CD8-positive, alpha-beta memory T cell (primary cell): ENCODE measurements at regions of chr9 and their contacts with region 1.

Region 1: GRCh38 chr9:19464764-19465585 is 56.2 kb downstream of the ACER2 start:
- DNase-seq: peak; percentile 51 to 72 (median 66)
- H3K4me3 ChIP-seq: peak overlapping the region; percentile 49
- H3K4me3 Mint-ChIP-seq: peak overlapping the region; percentile 78 to 91 (median 91)
- H3K27ac ChIP-seq: no peak overlapping the region
- H3K27ac Mint-ChIP-seq: peak overlapping the region in 4 of 8 donors; percentile 30 to 88 (median 54)
- H3K4me1 ChIP-seq: peaks cover 4% of the 10 kb centered on the region
- H3K4me1 Mint-ChIP-seq: peaks cover 8 to 13% (median 11%) of the 10 kb centered on the region in 3 donors
- H3K27me3 ChIP-seq: no peaks in the 10 kb centered on the region
- H3K27me3 Mint-ChIP-seq: no peaks in the 10 kb centered on the region

Region 2: DNA sequence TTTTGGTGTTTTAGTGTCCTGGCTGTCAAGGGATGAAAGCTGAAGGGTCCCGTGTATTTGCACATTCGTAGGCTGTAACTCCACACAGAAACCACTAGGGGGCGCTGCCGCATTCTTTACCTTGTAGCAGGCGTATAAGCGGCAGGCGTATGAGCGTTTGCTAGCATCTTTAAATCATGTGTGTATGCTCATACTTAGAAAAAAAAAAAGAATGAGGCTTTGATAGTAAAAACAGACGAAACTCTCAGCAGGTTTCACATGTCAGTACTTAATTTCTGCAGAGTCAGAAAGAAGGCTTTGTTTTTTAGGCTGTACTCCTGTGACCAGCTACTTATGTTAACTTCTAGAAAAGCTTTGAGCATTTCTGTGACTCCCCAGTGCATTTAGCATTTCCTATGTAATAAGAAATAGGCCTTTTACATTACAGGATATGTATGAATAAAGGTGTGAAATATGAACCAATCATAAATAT is 1209.8 kb before region 1 on chr9:
- CTCF ChIA-PET with region 1: interaction called, 10 read pairs
- POLR2A ChIA-PET with region 1: no interaction called
- DNase-seq: peak; percentile 45 to 69 (median 58)
- H3K4me3 ChIP-seq: no peak overlapping the region
- H3K4me3 Mint-ChIP-seq: no peak overlapping the region
- H3K27ac ChIP-seq: no peak overlapping the region
- H3K27ac Mint-ChIP-seq: peak overlapping the region in 1 of 8 donors; percentile 31
- H3K4me1 ChIP-seq: no peaks in the 10 kb centered on the region
- H3K4me1 Mint-ChIP-seq: peaks cover 0 to 8% (median 4%) of the 10 kb centered on the region in 3 donors
- H3K27me3 ChIP-seq: peaks cover 3% of the 10 kb centered on the region
- H3K27me3 Mint-ChIP-seq: peaks cover 2 to 13% of the 10 kb centered on the region in 2 donors

Region 3: DNA sequence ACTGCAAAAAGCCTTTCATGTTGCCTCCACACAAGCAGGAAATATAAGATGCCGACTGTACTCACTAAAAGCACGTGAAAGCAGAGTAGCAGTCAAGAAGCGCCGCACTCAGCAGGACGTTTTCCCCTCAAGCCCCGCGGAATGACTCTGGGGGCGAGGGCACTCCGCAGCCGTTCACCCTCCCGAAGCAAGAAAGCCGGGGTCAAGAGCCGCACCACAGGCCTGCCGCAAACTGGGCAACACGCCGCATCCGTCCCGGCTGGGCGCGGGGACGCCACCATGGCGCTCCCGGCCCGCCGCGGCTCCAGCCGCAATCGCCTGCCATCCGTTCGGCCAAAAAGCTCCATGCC is 85.3 kb before region 1 on chr9:
- CTCF ChIA-PET with region 1: interaction called, 10 read pairs
- POLR2A ChIA-PET with region 1: no interaction called
- DNase-seq: peak in 2 of 5 donors; percentile 31 to 40
- H3K4me3 ChIP-seq: peak overlapping the region; percentile 97
- H3K4me3 Mint-ChIP-seq: peak overlapping the region; percentile 94 to 100 (median 98)
- H3K27ac ChIP-seq: peak overlapping the region; percentile 89
- H3K27ac Mint-ChIP-seq: peak overlapping the region; percentile 90 to 100 (median 99)
- H3K4me1 ChIP-seq: peaks cover 30% of the 10 kb centered on the region
- H3K4me1 Mint-ChIP-seq: peaks cover 46 to 56% (median 49%) of the 10 kb centered on the region in 3 donors
- H3K27me3 ChIP-seq: no peaks in the 10 kb centered on the region
- H3K27me3 Mint-ChIP-seq: peaks cover 0 to 1% of the 10 kb centered on the region in 2 donors

Region 4: DNA sequence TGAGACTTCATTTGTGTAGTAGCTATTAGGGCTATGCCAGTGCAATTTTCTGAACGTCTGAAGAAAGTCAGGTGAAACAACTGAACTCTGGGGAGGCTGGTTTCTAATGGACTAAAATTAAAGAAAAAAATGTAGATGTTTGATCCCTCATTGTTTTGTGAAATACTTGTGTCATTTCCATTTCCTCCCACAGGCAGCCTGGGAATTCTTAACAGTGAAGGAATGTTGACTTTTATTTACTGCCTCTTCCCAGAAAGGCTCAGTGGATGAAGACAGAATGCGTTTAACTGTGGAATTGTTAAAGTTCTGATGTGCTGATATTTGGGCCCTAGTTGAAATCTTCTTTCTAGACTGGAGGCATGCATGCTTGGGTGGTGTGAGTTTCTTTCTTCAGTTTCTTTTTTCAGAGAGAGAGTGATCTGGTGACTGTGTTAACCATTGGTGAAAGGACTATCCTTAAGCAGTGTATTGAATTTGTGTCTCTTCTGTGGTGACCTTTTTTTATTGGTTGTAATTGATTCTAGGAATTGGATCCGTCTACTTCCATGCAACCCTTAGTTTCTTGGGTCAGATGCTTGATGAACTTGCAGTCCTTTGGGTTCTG is 40.7 kb before region 1 on chr9:
- CTCF ChIA-PET with region 1: interaction called, 14 read pairs
- POLR2A ChIA-PET with region 1: no interaction called
- DNase-seq: no peak
- H3K4me3 ChIP-seq: no peak overlapping the region
- H3K4me3 Mint-ChIP-seq: no peak overlapping the region
- H3K27ac ChIP-seq: no peak overlapping the region
- H3K27ac Mint-ChIP-seq: peak overlapping the region in 1 of 8 donors; percentile 6
- H3K4me1 ChIP-seq: no peaks in the 10 kb centered on the region
- H3K4me1 Mint-ChIP-seq: no peaks in the 10 kb centered on the region
- H3K27me3 ChIP-seq: no peaks in the 10 kb centered on the region
- H3K27me3 Mint-ChIP-seq: no peaks in the 10 kb centered on the region

Region 5: DNA sequence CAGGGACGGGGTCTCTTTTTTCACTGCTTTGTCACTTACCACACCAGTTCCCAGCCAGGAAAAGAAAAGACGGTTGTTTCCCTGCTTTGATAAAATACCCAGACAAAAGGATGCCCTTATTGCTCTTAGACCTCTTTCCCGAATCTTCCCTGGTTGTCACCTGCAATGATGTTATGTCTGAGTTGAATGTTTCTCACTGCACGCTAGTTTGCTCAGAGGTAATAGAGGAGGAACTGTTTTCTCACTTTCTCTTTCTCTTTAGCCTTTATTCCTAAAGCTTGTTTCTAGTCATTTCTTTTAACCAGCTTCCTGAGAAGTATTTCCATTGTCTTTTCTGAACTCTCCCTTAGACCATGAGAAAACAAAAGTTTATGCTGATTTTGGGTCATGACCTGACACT is 23.2 kb before region 1 on chr9:
- CTCF ChIA-PET with region 1: interaction called, 42 read pairs
- POLR2A ChIA-PET with region 1: no interaction called
- DNase-seq: no peak
- H3K4me3 ChIP-seq: peak overlapping the region; percentile 44
- H3K4me3 Mint-ChIP-seq: peak overlapping the region; percentile 14 to 77 (median 69)
- H3K27ac ChIP-seq: no peak overlapping the region
- H3K27ac Mint-ChIP-seq: peak overlapping the region in 7 of 8 donors; percentile 47 to 92 (median 83)
- H3K4me1 ChIP-seq: no peaks in the 10 kb centered on the region
- H3K4me1 Mint-ChIP-seq: peaks cover 11 to 16% (median 14%) of the 10 kb centered on the region in 3 donors
- H3K27me3 ChIP-seq: no peaks in the 10 kb centered on the region
- H3K27me3 Mint-ChIP-seq: no peaks in the 10 kb centered on the region

Region 6: DNA sequence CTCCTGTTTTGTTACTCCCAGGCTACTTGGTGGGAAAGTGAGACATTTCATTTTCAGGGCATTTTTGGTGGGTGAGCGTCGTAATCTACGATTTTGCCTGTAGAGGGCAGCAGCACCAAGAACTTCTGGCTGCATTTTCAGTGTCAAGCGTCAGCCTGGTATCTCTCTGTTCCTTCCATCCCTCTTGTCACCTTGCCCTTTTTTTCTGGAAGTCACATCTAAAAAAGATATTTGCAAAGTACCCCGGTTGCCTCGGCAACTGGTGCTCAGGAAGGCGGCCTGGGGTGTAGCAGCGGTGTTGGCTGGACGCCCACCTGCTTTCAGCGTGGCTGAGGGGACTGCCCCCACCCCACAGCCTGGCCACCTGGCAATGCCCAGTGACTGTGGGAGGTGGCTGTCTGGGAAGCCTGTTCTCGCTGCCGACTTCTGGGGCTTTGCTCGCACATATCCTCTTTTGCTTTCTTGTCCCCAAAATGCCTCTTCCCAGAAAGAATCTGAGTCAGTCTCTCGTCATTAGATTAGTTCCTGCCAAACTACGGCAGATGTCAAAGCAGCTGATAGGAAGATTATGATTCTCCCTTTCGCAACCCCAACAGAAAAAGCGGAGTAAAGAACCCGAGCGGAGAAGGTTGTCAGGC is 28.3 kb after region 1 on chr9:
- CTCF ChIA-PET with region 1: interaction called, 15 read pairs
- POLR2A ChIA-PET with region 1: no interaction called
- DNase-seq: peak in 2 of 5 donors; percentile 3 to 27
- H3K4me3 ChIP-seq: peak overlapping the region; percentile 51
- H3K4me3 Mint-ChIP-seq: peak overlapping the region in 6 of 7 donors; percentile 38 to 59 (median 46)
- H3K27ac ChIP-seq: no peak overlapping the region
- H3K27ac Mint-ChIP-seq: peak overlapping the region in 1 of 8 donors; percentile 2
- H3K4me1 ChIP-seq: peaks cover 6% of the 10 kb centered on the region
- H3K4me1 Mint-ChIP-seq: peaks cover 10 to 14% (median 13%) of the 10 kb centered on the region in 3 donors
- H3K27me3 ChIP-seq: no peaks in the 10 kb centered on the region
- H3K27me3 Mint-ChIP-seq: peaks cover 21 to 33% of the 10 kb centered on the region in 2 donors